ENCODE measurements at regions of chr4 and their contacts with region 1.

Region 1: GRCh38 chr4:2220016-2220630 is 21.8 kb downstream of the HAUS3 start:
- DNase-seq: peak; percentile 53 to 82
- ATAC-seq: peak; percentile 97

Region 2: DNA sequence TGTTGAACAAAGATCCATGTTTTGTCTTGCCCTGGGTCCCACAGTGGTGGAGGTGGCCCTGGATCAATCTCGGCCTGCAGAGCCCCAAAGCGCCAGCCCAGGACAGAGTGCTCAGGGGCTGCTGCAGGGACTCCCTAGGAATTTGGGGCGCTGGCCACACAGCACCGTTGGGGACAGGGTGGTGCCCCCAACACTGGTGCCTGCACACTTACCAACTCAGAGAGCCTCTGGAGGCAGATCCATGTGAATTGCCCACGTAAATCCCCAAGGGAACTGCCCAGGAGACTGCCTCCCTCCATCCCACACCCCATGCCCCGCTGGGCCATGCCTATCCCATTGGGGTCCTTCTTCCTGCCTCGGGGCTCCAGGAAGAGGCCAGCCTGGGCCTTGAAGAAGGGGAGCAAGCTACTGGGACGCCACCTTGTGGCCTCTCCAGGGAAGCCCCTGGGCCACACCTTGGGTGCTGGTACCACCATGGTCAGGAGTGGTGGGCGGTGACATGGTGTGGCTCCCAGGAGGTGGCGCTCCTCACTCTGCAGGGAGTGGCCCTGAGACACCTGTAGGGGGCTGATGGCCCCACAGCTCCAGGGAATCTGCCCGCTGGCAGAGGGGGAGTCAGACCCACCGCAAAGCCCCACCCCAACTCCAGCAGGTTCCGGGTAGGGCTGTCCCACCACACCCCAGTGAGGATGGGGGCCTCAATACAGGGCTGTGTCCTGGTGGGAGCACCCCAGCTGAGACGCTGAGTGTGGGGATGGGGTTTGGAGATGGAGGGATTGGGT is 221.5 kb after region 1 on chr4:
- intact Hi-C with region 1: loop called in 1 of 2 experiments (anchors 10 kb)
- DNase-seq: peak; percentile 55 to 77
- ATAC-seq: peak; percentile 88

Region 3: DNA sequence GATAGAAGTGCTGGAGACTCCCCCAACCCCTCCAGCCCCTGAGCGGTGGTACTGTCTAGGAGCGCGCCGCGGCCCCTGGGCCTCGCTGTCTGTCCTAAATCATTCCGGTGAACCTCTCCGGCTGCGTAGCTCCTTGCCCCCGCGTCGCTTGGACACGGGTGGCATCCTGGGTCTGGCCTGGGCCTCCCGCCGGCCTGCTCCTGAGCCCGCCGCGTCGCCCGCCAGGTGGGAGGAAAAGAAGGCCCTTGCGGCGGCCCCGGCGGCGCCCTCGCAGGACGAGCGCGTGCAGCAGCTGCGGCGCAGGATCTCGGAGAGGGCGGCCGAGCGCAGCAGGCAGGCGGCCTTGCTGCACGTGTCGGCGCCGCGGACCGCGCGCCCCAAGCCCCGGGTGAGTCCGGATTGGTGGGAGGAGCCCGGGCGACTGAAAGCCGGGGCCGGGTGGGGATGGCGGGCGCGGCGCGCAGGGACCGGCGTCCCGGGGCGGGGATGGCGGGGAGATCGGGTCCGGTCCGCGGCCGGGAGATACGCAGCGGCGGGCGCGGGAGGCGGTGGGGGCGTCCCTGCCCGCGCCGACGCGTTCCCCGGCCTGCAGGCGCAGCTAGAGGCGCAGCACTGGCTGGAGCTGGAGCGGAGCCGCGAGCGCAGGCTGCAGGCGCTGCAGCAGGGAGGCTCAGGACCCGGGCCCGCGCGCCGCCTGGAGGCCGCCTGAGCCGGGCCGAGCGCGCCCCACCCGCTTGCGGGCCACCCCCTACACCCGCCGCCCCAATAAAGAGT is 242.3 kb after region 1 on chr4:
- intact Hi-C with region 1: loop called in 1 of 2 experiments (anchors 5 kb)
- DNase-seq: peak; percentile 49 to 70
- ATAC-seq: peak; percentile 92

Region 4: DNA sequence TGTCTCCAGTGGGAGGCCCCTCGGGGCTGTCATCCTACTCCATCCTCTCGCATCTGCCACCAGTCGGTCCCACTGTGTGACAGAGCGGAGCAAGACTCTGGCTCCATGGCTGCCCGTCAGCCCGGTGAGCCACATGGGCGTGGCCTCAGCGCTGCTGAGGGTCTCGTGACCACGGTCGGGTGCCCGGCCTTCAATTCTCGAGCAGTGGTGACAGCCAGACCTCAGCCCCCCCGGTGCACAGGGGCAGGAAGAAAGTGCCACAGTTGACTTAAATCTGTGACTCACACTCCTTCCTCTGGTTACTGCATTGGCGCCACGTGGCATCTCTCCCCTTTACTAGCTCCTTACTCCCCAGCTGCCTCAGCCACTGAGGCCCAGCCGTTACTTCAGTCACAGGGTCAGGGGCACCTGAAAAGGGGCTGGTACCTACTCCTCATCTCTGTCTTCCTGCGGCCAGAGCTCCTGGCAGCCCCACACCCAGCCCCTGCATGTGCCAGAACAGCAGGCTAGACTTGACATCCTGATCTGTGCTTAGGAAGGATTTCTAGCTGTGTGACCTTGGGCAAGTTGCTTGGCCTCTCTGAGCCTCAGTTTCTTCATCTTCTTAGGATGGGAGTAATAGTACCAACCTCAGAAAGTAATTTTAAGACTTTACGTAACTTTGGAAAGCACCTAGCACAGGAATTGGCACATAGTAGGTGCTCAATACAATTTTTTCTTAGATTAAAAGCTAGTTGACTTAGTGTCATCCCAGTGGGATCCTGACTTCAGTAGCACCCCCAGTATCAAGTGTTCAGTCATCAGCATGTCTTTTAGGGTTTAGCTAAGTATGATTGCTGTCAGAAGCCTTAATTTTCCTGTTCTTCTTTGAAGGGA is 469.9 kb after region 1 on chr4:
- intact Hi-C with region 1: no loop called
- DNase-seq: peak in 1 of 2 donors; percentile 31
- ATAC-seq: no peak

Measured in left colon (tissue), 2 donors.